Tibial artery (tissue), 4 donors: ENCODE measurements at regions of chr6 and their contacts with region 1.

Region 1: DNA sequence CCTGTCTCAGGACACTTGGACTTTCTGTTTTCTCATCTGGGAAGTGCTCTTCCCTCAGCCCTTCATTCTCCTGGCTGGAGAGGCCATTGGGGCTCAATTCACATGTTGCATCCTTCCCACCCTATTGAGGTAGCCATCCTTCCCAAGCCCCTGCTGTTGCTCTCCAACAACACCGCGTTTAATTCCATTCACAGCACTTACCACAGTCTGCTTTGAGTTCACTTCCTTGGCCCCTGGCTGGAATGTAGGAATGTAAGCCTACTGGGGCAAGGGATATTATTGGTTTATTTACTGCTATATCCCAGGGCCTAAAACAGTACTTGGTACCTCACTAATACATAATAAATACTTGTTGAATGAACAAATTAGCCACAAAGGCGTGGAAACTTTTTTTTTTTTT is 6.7 kb upstream of the GFOD1 start:
- DNase-seq: no peak
- H3K4me3 ChIP-seq: no peak overlapping the region
- H3K27ac ChIP-seq: no peak overlapping the region
- H3K4me1 ChIP-seq: peaks cover 0 to 5% (median 0%) of the 10 kb centered on the region in 4 donors
- H3K27me3 ChIP-seq: no peaks in the 10 kb centered on the region
- CTCF ChIP-seq: no peak

Region 2: DNA sequence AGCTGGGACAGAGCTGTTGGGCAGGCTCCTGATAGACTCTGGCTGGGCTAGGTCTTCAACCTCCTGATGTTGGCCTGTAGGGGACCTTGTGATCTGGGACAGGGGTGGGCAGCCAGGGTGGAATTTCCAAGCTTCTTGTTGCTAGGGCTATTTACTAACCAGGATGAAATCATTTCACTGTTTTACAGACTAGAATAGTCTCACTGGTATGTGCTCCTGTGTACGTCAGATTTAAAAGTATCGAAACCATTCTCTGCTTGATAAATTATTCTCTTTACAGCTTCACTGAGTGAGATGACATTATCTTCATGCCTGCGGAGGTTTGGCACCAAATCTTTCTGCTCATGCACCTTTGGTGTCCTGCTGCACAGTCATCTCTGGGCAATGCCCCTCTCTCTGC is 1193.1 kb before region 1 on chr6:
- intact Hi-C with region 1: loop called (anchors 5 kb)
- DNase-seq: no peak
- H3K4me3 ChIP-seq: no peak overlapping the region
- H3K27ac ChIP-seq: no peak overlapping the region
- H3K4me1 ChIP-seq: peaks cover 0 to 20% (median 4%) of the 10 kb centered on the region in 4 donors
- H3K27me3 ChIP-seq: no peaks in the 10 kb centered on the region
- CTCF ChIP-seq: no peak

Region 3: DNA sequence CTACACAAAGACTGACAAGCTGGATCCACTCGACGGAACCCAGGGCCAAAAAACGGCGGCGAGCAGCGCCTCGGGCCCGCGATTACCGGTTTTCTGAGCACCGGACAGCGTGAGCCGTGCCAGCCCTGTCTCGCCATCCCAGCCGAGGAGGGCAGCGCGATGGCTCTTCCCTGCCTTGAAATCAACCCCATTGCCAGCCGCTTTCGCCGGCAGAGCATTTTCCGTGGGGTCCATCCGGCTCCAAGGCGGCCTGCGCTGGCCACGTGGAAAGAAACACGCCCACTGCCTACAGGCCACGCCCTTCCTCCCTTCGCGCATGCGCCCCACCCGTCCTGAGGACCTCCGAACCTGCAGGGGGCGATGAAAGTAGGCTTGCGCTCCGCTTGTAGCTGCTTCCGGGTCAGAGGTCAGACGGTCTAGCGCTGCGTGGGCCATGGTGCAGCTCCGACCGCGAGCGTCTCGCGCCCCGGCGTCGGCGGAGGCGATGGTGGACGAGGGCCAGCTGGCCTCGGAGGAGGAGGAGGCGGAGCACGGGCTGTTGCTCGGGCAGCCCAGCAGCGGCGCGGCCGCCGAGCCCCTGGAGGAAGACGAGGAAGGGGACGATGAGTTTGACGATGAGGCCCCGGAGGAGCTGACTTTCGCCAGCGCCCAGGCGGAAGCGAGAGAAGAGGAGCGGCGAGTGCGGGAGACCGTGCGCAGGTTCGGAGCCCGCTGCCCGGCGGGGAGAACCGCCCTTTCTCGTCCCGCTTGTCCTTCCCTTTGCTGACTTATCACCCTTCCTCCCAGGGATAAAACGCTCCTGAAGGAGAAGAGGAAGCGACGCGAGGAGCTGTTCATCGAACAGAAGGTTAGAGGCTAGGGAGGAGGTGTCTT is 121.0 kb after region 1 on chr6 and contains the start of gene NOL7:
- intact Hi-C with region 1: no loop called
- DNase-seq: peak; percentile 96 to 98
- H3K4me3 ChIP-seq: peak within 1 kb of the TSS; percentile 75 to 95
- H3K27ac ChIP-seq: peak within 1 kb of the TSS; percentile 92 to 96
- H3K4me1 ChIP-seq: peaks cover 0 to 25% (median 16%) of the 10 kb centered on the region in 4 donors
- H3K27me3 ChIP-seq: no peaks in the 10 kb centered on the region
- CTCF ChIP-seq: peak; percentile 86 to 94